ENCODE measurements at regions of chr14 and their contacts with region 1.

Region 1: DNA sequence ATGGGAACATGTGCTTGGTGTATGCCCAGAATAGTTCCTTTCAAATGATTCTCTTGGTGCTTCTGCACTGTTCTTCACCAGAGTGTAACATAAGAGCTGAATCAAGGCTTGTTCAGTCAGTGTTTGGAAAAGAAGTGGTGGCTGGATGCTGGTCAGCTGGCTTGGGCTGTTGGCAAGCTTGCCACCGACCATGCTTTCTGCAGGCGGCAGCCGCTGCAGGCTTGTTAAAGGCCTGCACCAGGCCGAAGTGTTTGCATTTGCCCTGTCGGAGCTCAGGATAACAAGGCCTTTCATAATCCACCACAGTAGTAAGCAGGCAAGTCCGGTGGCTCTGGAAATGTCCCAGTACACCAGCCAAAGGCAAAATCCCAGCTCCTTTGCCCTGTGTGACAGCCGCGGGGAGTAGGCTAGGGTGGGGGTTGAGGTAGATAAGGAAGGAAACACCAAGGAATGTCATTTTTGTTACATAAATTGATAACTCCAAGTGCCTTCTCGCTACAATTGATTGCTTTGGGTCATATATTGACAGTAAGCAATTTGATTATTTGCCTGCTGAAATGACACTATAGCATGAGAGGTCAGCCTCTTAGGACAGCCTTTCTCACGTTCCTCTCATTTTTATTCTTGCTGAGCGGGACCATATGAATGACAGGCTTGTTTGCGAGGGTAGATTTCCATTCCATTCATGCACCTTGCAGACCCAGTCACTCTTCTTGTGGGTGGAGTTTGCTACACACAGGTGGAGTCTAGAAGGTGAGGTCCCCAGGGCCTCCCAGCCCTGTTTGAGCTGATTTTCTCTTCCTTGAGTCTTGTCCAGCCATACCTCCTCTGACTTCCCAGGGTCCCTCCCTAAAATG is 27.1 kb downstream of the DAAM1 start:
- DNase-seq: peak; percentile 84 to 87
- ATAC-seq: peak; percentile 88
- H3K4me3 ChIP-seq: no peak overlapping the region
- H3K27ac ChIP-seq: peak overlapping the region in 1 of 2 donors; percentile 90
- H3K4me1 ChIP-seq: peaks cover 16 to 26% of the 10 kb centered on the region in 2 donors
- H3K27me3 ChIP-seq: no peaks in the 10 kb centered on the region

Region 2: DNA sequence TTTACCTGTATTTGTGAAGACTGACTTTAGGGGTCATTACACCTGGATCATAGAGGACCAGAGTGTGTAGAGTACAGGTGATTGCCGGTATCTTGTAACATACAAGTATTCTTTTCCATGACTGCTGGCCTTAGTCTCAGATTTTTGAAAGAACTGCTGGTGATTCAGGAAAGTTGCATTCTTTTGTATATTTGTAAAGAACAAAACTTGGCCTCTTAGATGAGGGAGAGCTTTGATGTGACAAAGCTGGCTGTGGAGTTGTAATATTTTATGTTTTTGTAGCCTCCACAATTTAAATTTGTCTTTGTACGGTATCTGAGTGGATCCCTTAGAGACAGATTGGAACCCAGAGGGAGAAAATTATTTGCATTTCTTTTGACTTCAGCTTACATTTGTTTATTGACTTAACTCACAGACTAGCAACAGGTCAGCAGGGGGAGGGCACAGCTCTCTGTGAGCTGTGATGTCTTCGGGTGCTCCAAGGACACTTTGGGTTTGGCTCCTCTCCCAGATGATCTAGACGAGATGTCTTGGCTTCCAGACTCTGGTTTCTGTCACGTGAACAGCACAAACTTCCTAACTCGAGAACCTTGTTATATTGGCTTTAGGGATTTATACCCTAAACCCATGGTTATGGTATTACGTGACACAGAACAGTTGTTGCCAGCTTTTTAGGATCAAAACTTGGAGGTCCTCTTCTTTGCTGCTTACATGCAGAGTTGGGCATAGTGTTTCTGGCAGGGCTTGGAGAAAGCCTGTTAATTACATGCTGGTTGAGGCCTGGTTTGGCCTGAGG is 38.8 kb after region 1 on chr14:
- intact Hi-C with region 1: loop called in 1 of 2 experiments (anchors 5 kb)
- DNase-seq: peak in 1 of 2 donors; percentile 79
- ATAC-seq: peak; percentile 85
- H3K4me3 ChIP-seq: no peak overlapping the region
- H3K27ac ChIP-seq: peak overlapping the region; percentile 68 to 97
- H3K4me1 ChIP-seq: peaks cover 20 to 26% of the 10 kb centered on the region in 2 donors
- H3K27me3 ChIP-seq: no peaks in the 10 kb centered on the region

Region 3: GRCh38 chr14:59398841-59399240 is 183.3 kb after region 1 on chr14:
- intact Hi-C with region 1: no loop called
- DNase-seq: no peak
- ATAC-seq: no peak
- H3K4me3 ChIP-seq: no peak overlapping the region
- H3K27ac ChIP-seq: no peak overlapping the region
- H3K4me1 ChIP-seq: no peaks in the 10 kb centered on the region
- H3K27me3 ChIP-seq: no peaks in the 10 kb centered on the region